ENCODE measurements at regions of chr2 and their contacts with region 1.

Region 1: DNA sequence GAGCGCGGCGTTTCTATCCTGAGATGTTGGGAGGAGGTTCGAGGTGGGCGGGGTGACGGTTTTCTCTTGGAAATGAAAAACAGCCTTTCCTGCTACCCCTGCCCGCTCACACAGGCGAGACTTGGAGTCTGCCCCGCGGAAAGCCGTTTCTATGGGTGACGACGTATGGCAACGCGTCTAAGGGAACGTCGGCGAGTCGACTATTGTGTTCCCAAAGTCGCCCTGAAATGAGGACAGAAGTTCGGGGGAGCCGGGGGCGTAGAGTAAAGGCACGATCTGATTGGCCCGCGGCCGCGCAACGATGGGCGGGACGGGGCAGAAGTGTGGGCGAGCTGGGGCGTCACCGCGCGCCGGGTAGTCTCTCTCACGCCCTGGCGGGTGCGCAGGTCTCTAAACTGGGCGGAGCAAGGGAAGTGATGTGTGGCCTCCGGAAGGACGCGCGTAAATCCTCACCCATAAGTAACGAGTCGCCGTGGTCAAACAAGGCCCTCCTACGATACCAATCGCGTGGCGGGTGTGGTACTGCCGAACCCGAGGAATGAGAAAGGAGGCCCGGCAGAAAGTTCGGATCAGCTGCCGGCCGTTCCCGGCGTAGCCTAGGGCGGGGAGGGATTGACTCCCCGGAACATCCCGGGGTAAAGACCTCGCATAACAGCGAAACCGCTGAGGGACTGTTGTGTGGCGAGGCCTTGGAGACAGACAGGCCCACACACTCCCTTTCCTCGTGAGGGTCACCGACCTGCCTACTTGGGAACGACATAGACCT is 89.6 kb downstream of the FAM161A start:
- DNase-seq: peak; percentile 98 to 99
- H3K4me3 ChIP-seq: peak overlapping the region; percentile 56
- H3K4me3 Mint-ChIP-seq: peak overlapping the region; percentile 72
- H3K27ac Mint-ChIP-seq: peak overlapping the region; percentile 97
- H3K4me1 ChIP-seq: no peaks in the 10 kb centered on the region
- H3K4me1 Mint-ChIP-seq: no peaks in the 10 kb centered on the region
- H3K27me3 ChIP-seq: no peaks in the 10 kb centered on the region
- H3K27me3 Mint-ChIP-seq: no peaks in the 10 kb centered on the region
- CTCF ChIP-seq: no peak

Region 2: DNA sequence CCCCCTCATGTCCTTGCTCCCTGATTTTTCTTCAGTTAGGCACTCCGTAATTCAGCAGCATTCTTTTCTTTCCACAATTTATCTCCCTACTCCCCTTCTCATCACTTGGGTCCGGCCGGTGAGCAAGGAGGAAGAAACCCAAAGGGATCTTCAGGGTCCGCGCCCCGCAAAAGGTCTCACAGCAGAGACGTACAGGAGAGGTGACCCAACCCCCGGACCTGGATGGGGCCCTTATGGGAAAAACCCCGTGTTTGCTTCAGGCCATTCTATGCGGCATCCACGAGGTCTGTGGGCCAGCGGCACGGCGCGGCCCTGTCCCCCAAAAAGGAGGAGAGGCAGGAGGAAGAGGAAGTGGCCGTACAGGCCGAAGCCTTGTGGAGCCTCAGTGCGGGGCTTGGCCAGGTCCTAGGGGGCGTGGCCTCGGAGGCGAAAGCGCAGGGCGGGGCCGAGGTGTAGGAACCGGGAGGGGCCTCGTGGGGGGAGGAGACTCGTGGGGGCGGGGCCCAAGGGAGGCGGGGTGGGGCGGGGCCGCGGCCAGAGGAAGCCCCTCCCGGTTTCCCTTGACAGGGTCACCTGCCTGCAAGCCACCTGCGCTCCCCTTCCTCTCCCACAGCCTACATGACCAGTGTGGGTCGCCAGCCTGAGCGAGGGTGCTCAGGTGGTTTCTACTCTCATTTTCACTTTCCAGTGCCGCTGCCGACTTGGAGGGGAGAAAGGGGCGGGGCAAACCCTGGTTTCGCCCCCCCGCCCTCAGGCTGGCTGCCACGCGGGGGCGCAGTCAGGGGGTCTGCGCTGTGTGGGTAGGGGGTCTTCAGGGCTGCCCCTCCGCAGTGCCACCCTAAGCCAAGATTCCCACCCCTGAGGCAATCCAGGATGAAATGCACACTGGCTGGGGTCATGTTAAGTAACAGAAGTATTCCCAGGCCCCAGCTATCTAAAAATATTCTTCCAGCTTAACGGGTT is 69.6 kb before region 1 on chr2:
- CTCF ChIA-PET with region 1: no interaction called
- POLR2A ChIA-PET with region 1: no interaction called
- intact Hi-C with region 1: loop called (anchors 1 kb)
- DNase-seq: peak; percentile 94 to 95
- H3K4me3 ChIP-seq: peak overlapping the region; percentile 72
- H3K4me3 Mint-ChIP-seq: peak overlapping the region; percentile 75
- H3K27ac Mint-ChIP-seq: peak overlapping the region; percentile 65
- H3K4me1 ChIP-seq: no peaks in the 10 kb centered on the region
- H3K4me1 Mint-ChIP-seq: no peaks in the 10 kb centered on the region
- H3K27me3 ChIP-seq: no peaks in the 10 kb centered on the region
- H3K27me3 Mint-ChIP-seq: no peaks in the 10 kb centered on the region
- CTCF ChIP-seq: peak; percentile 52 to 57

Region 3: GRCh38 chr2:61789807-61790602 is 25.8 kb after region 1 on chr2:
- CTCF ChIA-PET with region 1: interaction called, 3 read pairs
- POLR2A ChIA-PET with region 1: interaction called, 3 read pairs
- intact Hi-C with region 1: loop called (anchors 2 kb)
- DNase-seq: no peak
- H3K4me3 ChIP-seq: no peak overlapping the region
- H3K4me3 Mint-ChIP-seq: no peak overlapping the region
- H3K27ac Mint-ChIP-seq: no peak overlapping the region
- H3K4me1 ChIP-seq: no peaks in the 10 kb centered on the region
- H3K4me1 Mint-ChIP-seq: peaks cover 6% of the 10 kb centered on the region
- H3K27me3 ChIP-seq: no peaks in the 10 kb centered on the region
- H3K27me3 Mint-ChIP-seq: peaks cover 4% of the 10 kb centered on the region
- CTCF ChIP-seq: no peak

Region 4: DNA sequence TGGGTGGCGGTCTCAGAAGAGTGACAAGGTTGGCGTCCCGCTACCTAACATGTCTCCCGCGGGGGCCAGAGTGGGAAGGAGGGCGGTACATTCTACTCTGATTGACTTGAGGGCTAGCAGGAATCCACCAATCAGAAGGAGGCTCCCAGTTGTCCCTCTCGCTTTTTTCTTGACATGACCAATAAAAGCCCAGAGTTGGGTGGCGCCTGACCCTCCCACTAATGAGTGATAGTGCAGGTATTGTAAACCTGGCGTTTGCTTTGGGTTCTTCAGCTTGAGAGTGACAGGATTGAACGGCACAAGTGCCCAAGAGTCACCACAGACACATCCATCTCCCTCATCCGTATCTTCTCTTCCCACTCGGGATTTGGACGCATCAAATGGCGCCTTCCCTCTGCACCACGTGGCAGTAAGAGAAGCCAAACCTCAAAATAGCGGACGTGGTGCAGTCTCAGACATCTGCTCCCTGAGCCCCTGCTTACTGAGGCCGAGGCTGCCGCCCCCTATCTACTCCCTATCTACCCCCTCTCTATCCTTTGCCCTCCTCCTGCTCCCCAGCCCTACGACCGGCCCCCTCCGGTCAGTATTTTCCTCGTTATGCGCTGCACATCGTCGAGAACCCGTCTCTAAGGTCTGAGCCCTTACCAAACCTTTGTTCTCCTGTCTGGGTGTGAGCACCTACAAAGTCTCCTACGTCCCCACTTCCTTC is 90.4 kb after region 1 on chr2:
- CTCF ChIA-PET with region 1: no interaction called
- POLR2A ChIA-PET with region 1: interaction called, 6 read pairs
- intact Hi-C with region 1: loop called (anchors 1 kb)
- DNase-seq: peak; percentile 96 to 97
- H3K4me3 ChIP-seq: peak overlapping the region; percentile 96
- H3K4me3 Mint-ChIP-seq: peak overlapping the region; percentile 84
- H3K27ac Mint-ChIP-seq: peak overlapping the region; percentile 83
- H3K4me1 ChIP-seq: peaks cover 5% of the 10 kb centered on the region
- H3K4me1 Mint-ChIP-seq: no peaks in the 10 kb centered on the region
- H3K27me3 ChIP-seq: no peaks in the 10 kb centered on the region
- H3K27me3 Mint-ChIP-seq: no peaks in the 10 kb centered on the region
- CTCF ChIP-seq: no peak

Region 5: DNA sequence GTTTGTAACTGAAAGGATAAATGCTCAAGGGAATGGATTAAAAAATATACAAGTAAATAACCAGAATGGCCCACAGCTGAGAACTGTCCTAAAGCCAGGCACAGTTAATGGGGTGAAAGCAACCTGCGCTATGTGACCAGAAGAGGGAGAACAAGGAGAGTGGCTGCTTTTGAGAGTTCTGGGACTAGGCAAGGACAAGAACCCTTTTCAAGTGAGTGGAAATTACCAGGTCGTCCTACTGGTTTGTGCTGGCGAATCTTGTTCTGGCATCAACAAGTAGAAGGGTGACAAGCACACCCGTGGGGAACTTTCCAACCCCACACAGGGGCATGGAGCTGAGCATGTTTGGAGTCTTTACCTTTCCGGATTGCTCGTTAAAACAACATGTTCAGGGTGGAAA is 659.0 kb after region 1 on chr2:
- CTCF ChIA-PET with region 1: no interaction called
- POLR2A ChIA-PET with region 1: no interaction called
- intact Hi-C with region 1: no loop called
- DNase-seq: peak; percentile 46 to 47
- H3K4me3 ChIP-seq: no peak overlapping the region
- H3K4me3 Mint-ChIP-seq: no peak overlapping the region
- H3K27ac Mint-ChIP-seq: no peak overlapping the region
- H3K4me1 ChIP-seq: no peaks in the 10 kb centered on the region
- H3K4me1 Mint-ChIP-seq: no peaks in the 10 kb centered on the region
- H3K27me3 ChIP-seq: no peaks in the 10 kb centered on the region
- H3K27me3 Mint-ChIP-seq: no peaks in the 10 kb centered on the region
- CTCF ChIP-seq: peak; percentile 51 to 56

Measured in Caco-2 (cell line).